ENCODE measurements at regions of chr2 and their contacts with region 1.

Region 1: GRCh38 chr2:73779467-73780236 is at the start of gene DUSP11:
- DNase-seq: peak; percentile 87
- H3K4me3 ChIP-seq: peak within 1 kb of the TSS; percentile 100
- CTCF ChIP-seq: peak; percentile 95

Region 2: DNA sequence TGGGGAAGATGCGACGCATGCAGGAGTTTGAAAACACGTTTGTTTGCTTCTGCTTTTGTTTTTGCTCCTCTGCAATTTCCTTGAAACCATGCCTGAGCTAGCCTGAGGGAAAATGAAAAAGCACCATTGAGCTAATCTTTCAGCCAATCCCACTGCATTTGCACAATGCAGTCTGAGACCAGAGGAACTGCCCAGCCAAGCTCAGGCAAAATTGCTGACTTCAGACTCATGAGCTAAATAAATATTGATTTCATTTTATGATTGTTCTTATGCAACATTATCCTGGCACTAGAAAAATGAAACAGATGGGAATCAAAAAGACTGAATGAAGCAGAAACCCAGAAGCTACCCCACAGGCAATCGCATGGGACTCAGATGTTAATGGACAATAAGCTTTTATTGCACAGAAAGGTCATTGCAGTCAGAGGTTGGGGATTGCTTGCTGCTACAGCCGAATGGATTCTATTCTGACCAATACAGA is 79.5 kb before region 1 on chr2:
- in situ Hi-C with region 1: no loop called
- DNase-seq: no peak
- H3K4me3 ChIP-seq: no peak overlapping the region
- CTCF ChIP-seq: no peak

Region 3: DNA sequence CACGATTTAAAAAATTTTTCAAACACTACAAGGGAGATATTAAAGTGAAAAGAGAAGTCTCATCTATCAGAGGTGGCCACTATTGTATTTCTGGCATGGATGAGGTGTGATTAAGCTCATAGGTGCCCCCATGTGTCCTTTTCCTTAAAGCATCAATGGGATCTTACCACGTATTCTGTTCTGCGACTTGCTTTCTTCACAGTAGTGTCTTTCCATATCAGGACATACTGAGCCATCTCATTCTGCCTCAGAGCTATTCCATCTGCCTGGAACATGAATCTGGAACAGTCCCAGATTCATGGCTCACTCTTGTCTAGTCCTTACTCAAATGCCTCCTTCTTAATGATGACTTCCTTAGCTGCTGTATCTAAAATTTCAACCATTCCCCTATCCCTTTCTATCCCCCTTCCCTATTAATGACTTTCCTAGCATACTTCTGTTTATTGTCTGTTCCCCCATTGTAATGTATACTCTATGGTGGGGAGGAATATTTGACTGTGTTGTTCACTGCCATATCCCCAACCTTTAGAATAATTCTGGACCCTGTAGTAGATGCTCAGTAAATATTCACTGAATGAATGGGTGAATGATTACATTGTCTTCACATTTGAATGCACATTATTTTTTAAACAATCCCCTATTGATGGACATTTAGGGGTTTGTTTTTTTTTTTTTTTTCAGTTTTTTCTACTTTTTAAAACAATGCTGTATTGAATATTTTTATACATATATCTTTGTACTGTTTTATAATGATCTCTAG is 60.2 kb after region 1 on chr2:
- in situ Hi-C with region 1: loop called (anchors 10 kb)
- DNase-seq: no peak
- H3K4me3 ChIP-seq: no peak overlapping the region
- CTCF ChIP-seq: no peak

Measured in astrocyte of the cerebellum (primary cell).